ENCODE measurements at regions of chr15 and their contacts with region 1.

Region 1: DNA sequence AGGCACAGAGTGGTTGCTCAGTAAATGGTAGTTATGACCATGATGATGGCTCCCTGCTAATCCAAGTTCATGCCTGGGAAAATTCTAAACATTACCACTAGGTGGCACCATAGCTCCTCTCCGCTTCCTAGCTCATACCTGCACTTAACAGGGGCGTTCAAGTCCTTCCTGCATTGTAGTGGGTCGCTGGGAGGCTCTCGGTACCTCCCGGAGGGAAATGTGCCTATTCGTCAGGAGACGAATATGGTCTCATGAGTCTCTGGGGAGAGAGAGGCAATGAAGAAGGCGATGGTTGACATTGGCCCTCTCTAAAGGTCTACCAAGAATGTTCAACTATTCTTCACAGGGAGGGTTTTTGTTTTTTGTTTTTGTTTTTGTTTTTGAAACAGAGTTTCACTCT is 10.9 kb downstream of the MESP1 start:
- DNase-seq: peak; percentile 61
- H3K4me3 Mint-ChIP-seq: no peak overlapping the region
- H3K27ac Mint-ChIP-seq: no peak overlapping the region
- H3K4me1 Mint-ChIP-seq: peaks cover 2% of the 10 kb centered on the region
- H3K27me3 Mint-ChIP-seq: peaks cover 2% of the 10 kb centered on the region

Region 2: GRCh38 chr15:89728254-89728653 is 11.9 kb before region 1 on chr15:
- CTCF ChIA-PET with region 1: interaction called, 10 read pairs
- POLR2A ChIA-PET with region 1: no interaction called
- intact Hi-C with region 1: no loop called
- DNase-seq: no peak
- H3K4me3 Mint-ChIP-seq: no peak overlapping the region
- H3K27ac Mint-ChIP-seq: no peak overlapping the region
- H3K4me1 Mint-ChIP-seq: no peaks in the 10 kb centered on the region
- H3K27me3 Mint-ChIP-seq: no peaks in the 10 kb centered on the region

Region 3: DNA sequence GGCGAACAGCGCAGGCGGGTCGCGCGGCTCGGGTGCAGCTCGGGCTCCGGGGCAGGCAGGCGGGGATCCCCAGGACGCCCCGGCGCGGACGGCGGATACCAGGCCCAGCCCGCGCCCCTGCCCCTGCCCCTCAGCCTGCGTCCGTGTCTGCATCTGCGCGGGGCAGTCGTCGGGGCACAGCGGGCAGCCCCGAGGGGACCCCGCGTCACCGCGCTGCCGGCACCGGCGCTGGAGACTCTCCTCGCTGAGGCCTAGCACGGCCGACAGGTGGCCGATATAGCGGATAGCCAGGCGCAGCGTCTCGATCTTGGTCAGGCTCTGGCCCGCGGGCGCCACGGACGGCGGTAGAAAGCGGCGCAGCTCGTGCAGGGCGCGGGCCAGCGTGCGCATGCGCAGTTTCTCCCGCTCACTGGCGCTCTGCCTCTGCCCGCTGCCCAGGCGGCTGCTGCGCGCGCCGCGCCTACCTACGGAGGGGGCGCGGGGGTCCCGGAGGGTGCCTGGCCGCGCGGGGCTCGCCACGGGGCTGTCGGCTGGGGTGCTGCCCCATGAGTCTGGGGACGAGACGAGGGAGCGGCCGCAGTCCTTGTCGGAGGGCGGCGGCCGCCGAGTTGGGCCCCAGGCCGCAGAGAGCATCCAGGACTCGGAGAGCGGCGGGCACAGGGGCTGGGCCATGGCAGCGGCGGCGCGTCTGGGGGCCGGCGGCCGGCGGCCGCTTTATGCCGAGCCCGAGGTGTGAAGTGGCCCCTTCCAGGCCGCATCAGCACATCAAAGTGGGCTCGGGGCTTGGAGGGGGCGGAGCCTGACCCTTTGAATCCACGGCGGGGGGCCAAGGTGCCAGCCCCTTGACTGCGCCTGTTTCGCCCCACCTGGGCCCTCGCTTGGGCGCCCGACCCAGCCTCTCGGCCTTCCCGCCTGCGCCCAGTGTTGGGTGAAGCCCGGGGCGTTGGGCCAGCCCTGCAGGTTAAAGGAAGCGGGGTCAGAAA is 10.7 kb after region 1 on chr15 and contains the start of gene MESP1:
- CTCF ChIA-PET with region 1: interaction called, 14 read pairs
- POLR2A ChIA-PET with region 1: no interaction called
- intact Hi-C with region 1: no loop called
- DNase-seq: peak; percentile 91
- H3K4me3 Mint-ChIP-seq: peak within 1 kb of the TSS; percentile 66
- H3K27ac Mint-ChIP-seq: no peak within 1 kb of the TSS
- H3K4me1 Mint-ChIP-seq: peaks cover 3% of the 10 kb centered on the region
- H3K27me3 Mint-ChIP-seq: peaks cover 6% of the 10 kb centered on the region
- total RNA-seq, gene MESP1: 4.6 to 6.7 TPM

Region 4: DNA sequence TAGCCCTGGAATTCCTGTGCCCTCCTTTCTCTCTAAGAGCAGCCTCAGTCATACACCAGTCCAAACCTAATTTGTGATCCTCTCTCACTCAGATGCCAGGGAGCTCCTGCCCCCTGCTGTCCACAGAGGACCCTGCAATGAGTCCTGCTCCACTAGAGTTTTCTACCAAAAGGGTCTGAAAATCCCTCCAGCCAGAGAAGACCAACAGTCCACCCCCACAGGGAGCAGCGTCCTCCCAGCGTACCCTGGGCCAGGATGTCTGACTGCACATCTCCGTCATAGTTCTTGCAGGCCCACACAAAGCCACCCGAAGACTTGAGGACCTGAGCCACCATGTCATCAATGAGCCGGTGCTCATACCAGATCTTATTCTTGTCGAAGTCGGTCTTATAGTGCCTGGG is 346.7 kb after region 1 on chr15:
- CTCF ChIA-PET with region 1: interaction called, 15 read pairs
- POLR2A ChIA-PET with region 1: no interaction called
- intact Hi-C with region 1: loop called (anchors 5 kb)
- DNase-seq: peak; percentile 73
- H3K4me3 Mint-ChIP-seq: no peak overlapping the region
- H3K27ac Mint-ChIP-seq: peak overlapping the region; percentile 49
- H3K4me1 Mint-ChIP-seq: peaks cover 4% of the 10 kb centered on the region
- H3K27me3 Mint-ChIP-seq: no peaks in the 10 kb centered on the region

Region 5: GRCh38 chr15:90265271-90266060 is 525.3 kb after region 1 on chr15 and contains the start of gene NGRN:
- CTCF ChIA-PET with region 1: no interaction called
- POLR2A ChIA-PET with region 1: no interaction called
- intact Hi-C with region 1: no loop called
- DNase-seq: peak; percentile 96
- H3K4me3 Mint-ChIP-seq: peak within 1 kb of the TSS; percentile 92
- H3K27ac Mint-ChIP-seq: peak within 1 kb of the TSS; percentile 97
- H3K4me1 Mint-ChIP-seq: peaks cover 38% of the 10 kb centered on the region
- H3K27me3 Mint-ChIP-seq: no peaks in the 10 kb centered on the region
- total RNA-seq, gene NGRN: 25.3 to 28.6 TPM